ENCODE measurements at regions of chr12 and their contacts with region 1.

Region 1: DNA sequence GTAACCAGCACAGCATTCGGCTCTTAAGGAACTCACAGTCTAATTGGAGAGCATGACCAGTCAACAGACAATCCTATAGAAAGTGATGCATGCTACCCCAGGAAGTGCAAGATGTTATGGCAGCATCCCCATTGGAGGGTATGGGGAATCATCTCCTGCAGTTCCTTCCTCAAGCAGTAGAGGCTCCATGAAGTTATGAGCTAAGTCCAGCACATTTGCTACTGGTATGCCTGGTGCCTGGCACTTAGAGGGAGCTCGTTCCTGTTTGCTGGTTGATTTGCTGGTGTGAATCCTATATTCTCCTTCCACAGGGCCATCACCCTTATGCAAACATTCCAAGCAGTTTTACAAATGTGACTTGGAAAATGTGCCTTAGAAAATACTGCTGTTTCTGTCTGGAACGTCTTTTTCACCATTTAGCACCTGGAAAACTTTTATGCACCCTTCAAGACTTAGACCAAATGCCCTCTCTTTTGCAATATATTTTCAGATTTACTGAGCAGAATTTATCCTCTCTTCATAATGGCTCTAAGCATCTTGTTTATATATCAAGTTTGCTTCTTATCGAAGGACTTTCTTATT is 136.1 kb upstream of the WSCD2 start:
- DNase-seq: peak; percentile 40
- H3K4me3 ChIP-seq: no peak overlapping the region
- H3K27ac ChIP-seq: no peak overlapping the region
- H3K4me1 ChIP-seq: no peaks in the 10 kb centered on the region
- CTCF ChIP-seq: peak; percentile 62

Region 2: DNA sequence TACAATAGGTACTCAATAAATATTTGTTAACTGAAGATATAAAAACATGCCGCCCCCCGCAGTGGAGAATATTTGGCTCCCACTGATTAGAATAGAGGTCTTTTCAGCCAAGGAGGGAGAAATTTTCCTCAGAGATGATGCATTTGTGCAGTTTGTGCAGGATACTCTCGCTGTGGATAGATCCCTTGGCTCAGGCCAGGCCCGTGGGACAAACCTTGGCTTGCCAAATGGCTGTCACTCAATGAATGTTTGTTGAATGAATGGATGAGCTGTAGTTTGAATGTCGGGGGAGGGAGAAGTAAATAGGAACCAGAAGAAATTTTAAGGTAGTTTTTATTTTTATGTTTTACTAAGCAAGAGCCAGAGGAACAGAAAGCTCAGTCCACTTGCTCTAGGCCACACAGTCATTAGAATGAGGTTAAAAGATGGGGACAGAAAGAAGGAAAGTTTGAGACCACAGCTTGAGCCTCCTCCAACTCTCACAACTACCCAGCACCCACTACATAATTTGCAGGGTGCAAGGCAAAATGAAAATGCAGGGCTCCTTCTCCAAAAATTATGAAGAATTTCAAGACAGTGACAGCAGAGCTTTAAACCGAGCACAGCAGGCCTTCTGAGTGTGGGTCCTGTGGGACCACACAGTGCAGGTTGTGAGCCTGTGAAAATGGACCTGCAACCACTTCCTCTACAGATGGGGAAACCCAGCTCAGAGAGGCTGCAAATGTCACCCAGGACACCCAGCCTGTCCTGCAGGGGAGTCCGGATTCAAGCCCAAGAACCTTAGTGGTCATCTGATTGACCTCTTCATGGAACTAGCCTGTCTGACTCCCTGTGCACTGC is 187.5 kb after region 1 on chr12:
- CTCF ChIA-PET with region 1: no interaction called
- POLR2A ChIA-PET with region 1: interaction called, 4 read pairs
- intact Hi-C with region 1: loop called (anchors 10 kb)
- DNase-seq: no peak
- H3K4me3 ChIP-seq: no peak overlapping the region
- H3K27ac ChIP-seq: no peak overlapping the region
- H3K4me1 ChIP-seq: no peaks in the 10 kb centered on the region
- CTCF ChIP-seq: no peak